PC-3 (cell line): ENCODE measurements at regions of chr17 and their contacts with region 1.

Region 1: DNA sequence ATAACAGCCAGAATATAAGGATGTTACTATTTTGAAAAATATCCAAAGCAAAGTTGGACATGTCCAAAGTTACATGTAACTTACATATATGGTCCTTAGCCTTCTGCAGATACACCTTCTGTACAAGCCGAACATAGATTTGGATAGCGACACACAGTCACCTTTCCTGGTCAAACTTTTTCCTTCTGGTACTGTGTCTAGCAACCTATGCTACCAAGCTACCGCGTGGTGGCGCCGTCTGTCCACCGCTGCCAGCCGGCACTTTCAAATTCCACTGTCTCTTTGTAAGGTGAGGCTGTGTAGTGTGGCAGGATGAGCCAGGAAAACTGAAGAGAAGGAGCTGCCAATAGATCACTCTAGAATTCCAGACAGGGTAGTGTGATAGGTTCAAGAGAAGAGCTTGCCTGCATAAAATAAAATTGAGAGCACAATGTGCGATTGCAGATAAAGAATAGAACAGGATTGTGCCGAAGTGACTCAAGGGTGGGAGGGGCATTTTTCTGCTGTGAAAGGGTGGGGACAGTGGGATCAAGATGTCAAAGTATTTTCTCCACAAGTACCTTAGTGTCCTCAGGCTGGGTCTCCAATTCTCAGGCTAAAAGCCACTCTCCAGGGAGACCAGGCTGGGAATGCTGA is 366.9 kb downstream of the SLC39A11 start:
- DNase-seq: peak; percentile 88
- ATAC-seq: peak; percentile 74
- H3K4me3 ChIP-seq: no peak overlapping the region
- H3K27ac ChIP-seq: peak overlapping the region; percentile 69
- H3K4me1 ChIP-seq: peaks cover 42% of the 10 kb centered on the region
- H3K27me3 ChIP-seq: no peaks in the 10 kb centered on the region
- CTCF ChIP-seq: peak; percentile 99

Region 2: DNA sequence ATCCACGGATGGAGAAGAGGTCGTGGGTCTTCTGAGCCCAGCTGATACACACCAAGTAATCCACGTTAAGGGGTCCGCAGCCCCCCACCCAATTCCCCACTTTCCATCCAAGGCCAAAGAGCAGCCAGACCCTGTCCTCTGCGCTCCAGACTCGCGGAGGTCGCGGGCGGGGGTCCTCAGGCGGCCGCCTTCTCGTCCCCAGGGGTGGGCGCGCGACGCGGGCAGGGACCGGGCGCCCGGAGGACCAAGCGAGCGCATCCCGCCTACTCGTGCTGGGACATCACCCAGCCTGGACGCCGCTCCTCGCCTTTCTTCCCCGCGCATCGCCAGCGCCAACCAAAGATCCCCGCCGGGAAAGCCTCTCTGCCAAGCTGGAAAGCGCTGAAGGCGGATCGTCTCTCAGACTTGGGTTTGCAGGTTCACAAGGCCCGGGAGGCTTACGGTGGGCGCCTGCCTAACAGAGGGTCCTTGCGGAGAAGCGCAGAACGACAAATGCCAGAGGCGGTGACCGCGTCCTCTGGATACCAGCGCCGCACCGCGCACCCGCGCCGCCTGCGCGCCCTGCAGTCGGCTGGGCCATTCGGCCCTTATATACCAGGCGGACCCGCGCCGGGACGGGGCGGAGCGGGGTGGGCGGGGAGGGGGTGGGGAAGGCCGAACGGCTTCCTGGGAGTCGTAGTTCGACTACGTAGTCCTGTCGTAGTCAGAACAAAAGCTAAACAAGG is 133.1 kb before region 1 on chr17:
- CTCF ChIA-PET with region 1: interaction called, 5 read pairs
- POLR2A ChIA-PET with region 1: no interaction called
- intact Hi-C with region 1: loop called (anchors 2 kb)
- DNase-seq: peak; percentile 95
- ATAC-seq: peak; percentile 66
- H3K4me3 ChIP-seq: peak overlapping the region; percentile 95
- H3K27ac ChIP-seq: peak overlapping the region; percentile 91
- H3K4me1 ChIP-seq: peaks cover 22% of the 10 kb centered on the region
- H3K27me3 ChIP-seq: no peaks in the 10 kb centered on the region
- CTCF ChIP-seq: no peak

Region 3: DNA sequence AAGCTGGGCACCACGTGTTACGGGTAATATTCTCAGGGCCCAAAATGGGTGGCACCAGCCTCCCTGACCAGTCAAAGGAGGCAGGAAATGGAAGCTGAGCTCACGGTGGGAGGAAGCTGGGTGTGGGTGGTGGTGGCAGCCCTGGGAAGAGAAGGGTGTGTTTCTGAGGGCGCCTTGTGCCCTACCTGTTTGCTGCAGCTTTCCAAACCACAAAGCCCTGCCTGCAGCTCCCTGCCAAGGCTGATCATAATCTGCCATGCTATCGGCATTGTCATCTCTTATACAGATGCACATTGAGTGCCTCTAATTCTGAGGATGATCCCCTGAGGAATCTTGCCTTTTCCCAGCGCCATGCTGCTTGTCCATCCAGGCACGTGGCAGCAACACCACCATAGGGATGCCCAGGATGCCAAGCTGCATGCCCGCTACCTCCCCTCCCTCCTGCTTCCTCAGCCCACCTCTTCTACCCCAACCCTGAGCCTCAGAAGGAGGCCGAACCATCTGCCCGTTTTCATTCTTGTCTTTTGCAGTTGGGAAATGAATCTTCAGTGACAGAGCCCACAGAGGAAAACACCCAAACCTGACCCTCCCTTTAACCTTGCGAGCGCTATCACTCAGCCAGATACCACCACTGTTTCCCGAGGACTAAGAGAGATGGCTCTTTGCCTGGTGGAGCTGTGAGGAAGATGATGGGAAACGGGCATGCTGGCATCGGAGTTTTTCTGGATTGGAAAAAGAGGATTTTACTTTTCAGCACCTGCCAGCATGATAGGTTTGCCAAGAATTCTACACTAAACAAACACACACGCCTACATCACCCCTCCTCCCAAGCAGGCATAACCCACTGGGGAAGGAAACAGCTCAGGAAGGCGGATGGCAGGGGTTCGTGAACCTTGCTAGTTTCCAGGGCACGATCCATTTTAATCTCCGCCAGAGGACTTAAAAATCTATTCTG is 90.6 kb before region 1 on chr17:
- CTCF ChIA-PET with region 1: no interaction called
- POLR2A ChIA-PET with region 1: no interaction called
- intact Hi-C with region 1: no loop called
- DNase-seq: peak; percentile 82
- ATAC-seq: peak; percentile 55
- H3K4me3 ChIP-seq: no peak overlapping the region
- H3K27ac ChIP-seq: peak overlapping the region; percentile 86
- H3K4me1 ChIP-seq: peaks cover 34% of the 10 kb centered on the region
- H3K27me3 ChIP-seq: no peaks in the 10 kb centered on the region
- CTCF ChIP-seq: no peak

Region 4: DNA sequence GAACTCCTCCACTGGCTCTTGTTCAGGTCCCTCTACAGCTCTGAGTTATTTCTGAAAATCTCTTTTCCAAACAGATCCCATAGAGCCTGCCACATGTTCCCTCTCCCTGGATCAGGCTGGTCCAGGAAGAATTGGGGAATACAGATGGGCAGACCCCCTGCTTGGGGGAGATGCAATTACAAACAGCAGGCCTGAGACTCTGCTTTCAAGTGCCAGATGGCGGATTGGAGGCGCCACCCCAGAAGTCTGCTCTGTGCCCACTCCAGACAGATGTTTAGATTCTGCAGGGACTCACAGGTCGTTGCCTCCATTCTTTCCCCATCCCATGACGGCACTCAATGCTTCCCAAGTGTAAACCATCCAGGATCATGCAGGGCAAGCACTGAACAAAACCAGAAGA is 50.4 kb after region 1 on chr17:
- CTCF ChIA-PET with region 1: no interaction called
- POLR2A ChIA-PET with region 1: no interaction called
- intact Hi-C with region 1: no loop called
- DNase-seq: no peak
- ATAC-seq: no peak
- H3K4me3 ChIP-seq: no peak overlapping the region
- H3K27ac ChIP-seq: no peak overlapping the region
- H3K4me1 ChIP-seq: no peaks in the 10 kb centered on the region
- H3K27me3 ChIP-seq: no peaks in the 10 kb centered on the region
- CTCF ChIP-seq: no peak

Region 5: GRCh38 chr17:72788950-72789585 is 63.5 kb after region 1 on chr17:
- CTCF ChIA-PET with region 1: no interaction called
- POLR2A ChIA-PET with region 1: no interaction called
- intact Hi-C with region 1: no loop called
- DNase-seq: no peak
- ATAC-seq: no peak
- H3K4me3 ChIP-seq: no peak overlapping the region
- H3K27ac ChIP-seq: no peak overlapping the region
- H3K4me1 ChIP-seq: no peaks in the 10 kb centered on the region
- H3K27me3 ChIP-seq: no peaks in the 10 kb centered on the region
- CTCF ChIP-seq: no peak

Region 6: GRCh38 chr17:72858826-72859495 is 133.4 kb after region 1 on chr17:
- CTCF ChIA-PET with region 1: no interaction called
- POLR2A ChIA-PET with region 1: interaction called, 23 read pairs
- intact Hi-C with region 1: no loop called
- DNase-seq: no peak
- ATAC-seq: no peak
- H3K4me3 ChIP-seq: no peak overlapping the region
- H3K27ac ChIP-seq: no peak overlapping the region
- H3K4me1 ChIP-seq: no peaks in the 10 kb centered on the region
- H3K27me3 ChIP-seq: no peaks in the 10 kb centered on the region
- CTCF ChIP-seq: no peak

Region 7: DNA sequence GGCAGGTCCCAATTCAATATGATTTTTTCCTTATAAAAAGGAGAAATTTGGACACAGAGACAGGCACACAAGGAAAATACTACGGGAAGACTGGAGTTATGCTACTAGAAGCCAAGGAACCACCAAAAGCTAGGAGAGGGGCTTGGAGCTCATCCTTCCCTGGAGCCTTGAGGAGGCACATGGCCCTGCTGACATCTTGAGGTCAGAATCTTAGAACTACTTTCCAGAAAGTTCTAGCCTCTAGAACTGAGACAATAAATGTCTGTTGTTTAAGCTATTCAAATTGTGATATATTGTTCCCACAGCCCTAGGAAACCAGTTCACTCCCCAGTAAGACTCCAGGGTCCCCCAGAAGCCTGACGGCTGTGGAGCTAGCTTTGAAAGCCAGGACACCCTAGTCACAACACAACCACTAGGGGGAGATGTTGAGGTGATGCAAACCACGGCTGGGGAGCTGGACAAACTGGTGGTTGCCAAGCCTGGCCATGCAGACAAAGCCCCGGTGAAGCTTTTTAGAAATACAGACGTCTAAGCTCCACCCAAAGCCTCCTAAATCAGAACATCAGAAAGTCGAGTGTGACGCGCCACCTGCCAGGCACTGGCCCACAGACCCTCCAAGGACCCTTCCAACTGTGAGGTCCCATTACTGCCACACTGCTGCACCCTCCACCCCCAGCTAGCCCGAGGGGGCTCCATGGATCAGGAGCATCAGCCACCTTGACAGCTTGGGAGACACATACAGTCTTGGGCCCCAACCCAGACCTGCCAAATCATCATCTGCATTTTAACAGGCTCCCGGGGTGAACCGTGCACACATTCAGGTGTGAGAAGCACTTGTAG is 260.6 kb after region 1 on chr17:
- CTCF ChIA-PET with region 1: interaction called, 14 read pairs
- POLR2A ChIA-PET with region 1: no interaction called
- intact Hi-C with region 1: loop called (anchors 5 kb)
- DNase-seq: peak; percentile 88
- ATAC-seq: peak; percentile 57
- H3K4me3 ChIP-seq: no peak overlapping the region
- H3K27ac ChIP-seq: no peak overlapping the region
- H3K4me1 ChIP-seq: peaks cover 25% of the 10 kb centered on the region
- H3K27me3 ChIP-seq: no peaks in the 10 kb centered on the region
- CTCF ChIP-seq: peak; percentile 98

Region 8: DNA sequence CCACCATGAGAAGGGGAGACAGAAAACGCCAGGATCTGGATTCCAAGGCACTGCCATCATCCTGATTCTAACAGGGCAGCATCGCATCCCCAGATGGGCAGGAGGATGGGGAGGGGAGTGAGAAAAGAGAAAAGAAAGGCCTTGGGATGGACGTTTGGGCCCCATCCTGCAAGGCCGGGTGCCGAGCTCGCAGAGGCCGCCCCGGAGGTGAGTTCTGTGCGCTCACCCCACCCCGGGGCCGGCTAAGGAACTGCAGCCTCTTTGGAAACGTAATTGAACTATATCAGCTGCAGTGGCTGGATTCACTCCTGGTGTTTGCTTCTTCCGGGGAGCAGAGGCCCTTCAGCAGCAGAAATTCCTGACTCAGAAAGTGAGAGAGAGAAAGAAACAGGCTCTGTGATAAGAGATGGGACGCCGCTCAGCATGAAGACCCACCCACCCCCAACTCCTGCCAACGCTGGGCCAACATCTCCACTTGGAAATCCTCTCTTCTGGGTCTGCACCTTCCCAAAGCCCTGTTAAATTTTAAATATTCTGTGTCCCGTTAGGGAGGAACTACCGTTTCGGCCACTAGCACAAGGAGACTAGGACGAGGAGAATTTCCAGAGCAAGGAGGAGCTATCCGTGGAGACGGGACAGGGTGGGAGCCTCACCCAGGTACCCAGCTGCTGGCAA is 430.8 kb after region 1 on chr17:
- CTCF ChIA-PET with region 1: interaction called, 26 read pairs
- POLR2A ChIA-PET with region 1: no interaction called
- intact Hi-C with region 1: loop called (anchors 1 kb)
- DNase-seq: peak; percentile 77
- ATAC-seq: peak; percentile 95
- H3K4me3 ChIP-seq: no peak overlapping the region
- H3K27ac ChIP-seq: no peak overlapping the region
- H3K4me1 ChIP-seq: peaks cover 3% of the 10 kb centered on the region; the same call in 1 of the 2 replicates
- H3K27me3 ChIP-seq: 0 out of 2 replicates have a peak, but pooled peaks cover 3% of the 10 kb centered on the region
- CTCF ChIP-seq: peak; percentile 92

Region 9: DNA sequence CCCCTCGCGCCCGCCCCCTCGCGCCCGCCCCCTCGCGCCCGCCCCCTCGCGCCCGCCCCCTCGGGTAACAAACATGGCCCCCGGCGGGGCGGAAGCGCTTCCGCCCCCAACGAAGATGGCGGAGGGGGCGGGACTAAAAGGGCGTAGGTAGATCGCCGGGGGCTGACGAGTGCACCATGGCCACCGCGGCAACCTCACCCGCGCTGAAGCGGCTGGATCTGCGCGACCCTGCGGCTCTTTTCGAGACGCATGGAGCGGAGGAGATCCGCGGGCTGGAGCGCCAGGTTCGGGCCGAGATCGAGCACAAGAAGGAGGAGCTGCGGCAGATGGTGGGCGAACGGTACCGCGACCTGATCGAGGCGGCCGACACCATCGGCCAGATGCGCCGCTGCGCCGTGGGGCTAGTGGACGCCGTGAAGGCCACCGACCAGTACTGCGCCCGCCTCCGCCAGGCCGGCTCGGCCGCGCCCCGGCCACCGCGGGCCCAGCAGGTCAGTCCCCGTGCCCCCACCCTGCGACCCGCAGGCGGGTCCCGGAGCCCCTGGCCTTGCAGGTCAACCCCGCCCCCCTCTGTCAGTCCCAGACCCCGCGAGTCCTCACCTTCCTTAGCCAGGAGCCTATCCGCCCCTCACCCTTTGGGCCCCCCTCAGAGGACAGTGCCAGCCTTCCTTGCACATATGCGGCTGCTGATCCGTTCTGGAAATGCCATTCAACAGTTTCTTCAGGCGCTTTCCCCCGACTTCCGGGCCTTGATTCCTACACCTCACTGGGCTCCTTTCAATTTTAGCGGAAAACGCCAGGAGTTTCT is 467.5 kb after region 1 on chr17 and contains the start of gene COG1:
- CTCF ChIA-PET with region 1: interaction called, 54 read pairs
- POLR2A ChIA-PET with region 1: no interaction called
- intact Hi-C with region 1: loop called (anchors 1 kb)
- DNase-seq: peak; percentile 94
- ATAC-seq: peak; percentile 67
- H3K4me3 ChIP-seq: peak within 1 kb of the TSS; percentile 82
- H3K27ac ChIP-seq: peak within 1 kb of the TSS; percentile 83
- H3K4me1 ChIP-seq: peaks cover 17% of the 10 kb centered on the region
- H3K27me3 ChIP-seq: no peaks in the 10 kb centered on the region
- CTCF ChIP-seq: no peak
- total RNA-seq, gene COG1: 24.1 and 31.6 TPM in 2 replicates

Region 10: GRCh38 chr17:73371285-73371684 is 645.7 kb after region 1 on chr17:
- CTCF ChIA-PET with region 1: interaction called, 6 read pairs
- POLR2A ChIA-PET with region 1: no interaction called
- intact Hi-C with region 1: loop called (anchors 5 kb)
- DNase-seq: peak; percentile 90
- ATAC-seq: peak; percentile 61
- H3K4me3 ChIP-seq: no peak overlapping the region
- H3K27ac ChIP-seq: peak overlapping the region; percentile 15; the same call in 1 of the 2 replicates
- H3K4me1 ChIP-seq: peaks cover 10% of the 10 kb centered on the region
- H3K27me3 ChIP-seq: no peaks in the 10 kb centered on the region
- CTCF ChIP-seq: no peak